ENCODE measurements at regions of chr11 and their contacts with region 1.

Region 1: DNA sequence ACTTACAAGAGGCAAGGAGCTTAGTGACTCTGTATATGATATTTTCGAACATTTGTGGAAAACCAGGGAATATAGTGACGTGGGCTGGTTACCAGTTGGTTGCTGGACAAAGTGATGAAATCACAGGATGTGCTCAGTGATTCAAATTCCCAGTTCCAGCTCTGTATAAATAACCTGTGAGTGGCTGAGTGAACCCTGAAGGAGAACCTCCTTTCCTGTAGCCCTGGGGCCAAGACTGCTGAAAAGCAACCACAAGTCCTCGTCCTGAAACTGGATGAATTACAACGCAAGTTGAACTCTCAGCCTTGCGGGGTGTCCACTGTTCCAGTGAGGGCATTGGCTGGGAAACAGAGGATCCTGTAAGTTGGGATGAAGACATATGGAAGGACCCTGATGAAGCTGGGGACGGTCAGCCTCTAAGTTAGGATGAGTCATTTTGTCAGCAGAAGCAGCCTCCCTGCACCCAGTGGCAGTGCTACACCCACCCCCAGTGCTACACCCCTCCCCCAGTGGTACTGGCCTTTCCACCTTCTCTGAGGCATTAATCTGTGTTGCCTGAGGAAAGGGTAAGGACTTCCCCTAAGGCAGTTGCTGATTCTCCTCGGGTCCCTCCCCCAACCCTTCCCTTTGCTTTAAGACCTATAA is 22.0 kb upstream of the CD81 start:
- DNase-seq: peak in 1 of 2 experiments; percentile 9
- H3K4me3 ChIP-seq: no peak overlapping the region
- H3K27ac ChIP-seq: peak overlapping the region; percentile 23; the same call in 1 of the 2 replicates
- H3K4me1 ChIP-seq: peaks cover 9% of the 10 kb centered on the region; the same call in 1 of the 2 replicates
- H3K27me3 ChIP-seq: peaks cover 11% of the 10 kb centered on the region; the same call in 1 of the 2 replicates
- CTCF ChIP-seq: no peak

Region 2: GRCh38 chr11:2178906-2179494 is 176.1 kb before region 1 on chr11:
- CTCF ChIA-PET with region 1: no interaction called
- POLR2A ChIA-PET with region 1: no interaction called
- intact Hi-C with region 1: no loop called
- DNase-seq: peak; percentile 87 to 93
- H3K4me3 ChIP-seq: no peak overlapping the region; the same call in 1 of the 2 replicates
- H3K27ac ChIP-seq: peak overlapping the region; percentile 89
- H3K4me1 ChIP-seq: peaks cover 48% of the 10 kb centered on the region
- H3K27me3 ChIP-seq: no peaks in the 10 kb centered on the region
- CTCF ChIP-seq: no peak

Region 3: DNA sequence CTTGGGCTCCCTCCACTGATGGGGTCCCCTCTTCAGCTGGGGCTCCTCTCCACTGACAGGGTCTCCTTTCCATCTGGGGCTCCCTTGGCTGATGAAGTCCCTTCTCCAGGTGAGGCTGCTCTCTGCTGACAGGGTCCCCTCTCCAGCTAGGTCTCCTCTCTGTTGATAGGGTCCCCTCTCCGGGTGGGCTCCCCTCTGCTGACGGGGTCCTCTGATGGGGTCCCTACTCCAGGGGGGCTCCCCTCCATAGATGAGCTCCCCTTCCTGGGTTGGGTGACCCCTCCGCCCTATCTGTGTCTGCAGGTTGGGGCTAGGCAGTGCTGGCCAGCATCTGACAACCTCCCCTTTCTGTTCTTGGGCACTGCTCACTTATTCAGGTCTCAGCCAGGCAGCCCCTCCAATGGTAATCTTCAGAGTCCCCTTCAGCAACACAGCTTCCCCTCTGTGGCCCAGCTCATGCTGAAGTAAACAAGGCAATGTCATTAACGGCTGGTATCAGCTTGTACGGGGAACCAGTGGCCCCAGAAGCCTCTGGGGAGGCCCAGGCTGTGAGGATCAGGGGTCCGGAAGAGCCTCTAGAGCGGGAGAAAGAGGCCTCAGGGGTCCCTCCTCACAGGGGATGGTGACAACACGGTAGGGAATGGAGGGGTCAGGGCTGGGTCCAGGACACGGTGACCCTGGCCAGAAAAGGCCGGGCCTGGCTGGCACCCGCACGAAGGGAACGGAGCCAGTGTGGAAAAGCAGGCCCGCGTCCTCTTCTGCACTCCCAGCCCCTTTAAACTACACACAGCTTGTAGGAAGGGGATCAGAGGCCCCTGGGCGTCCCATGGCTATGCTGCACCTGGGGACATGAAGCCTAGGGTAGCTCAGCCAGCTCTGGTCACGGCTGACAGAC is 12.4 kb after region 1 on chr11:
- CTCF ChIA-PET with region 1: no interaction called
- POLR2A ChIA-PET with region 1: no interaction called
- intact Hi-C with region 1: loop called (anchors 1 kb)
- DNase-seq: no peak
- H3K4me3 ChIP-seq: no peak overlapping the region
- H3K27ac ChIP-seq: no peak overlapping the region
- H3K4me1 ChIP-seq: no peaks in the 10 kb centered on the region
- H3K27me3 ChIP-seq: peaks cover 3% of the 10 kb centered on the region; the same call in 1 of the 2 replicates
- CTCF ChIP-seq: no peak

Region 4: DNA sequence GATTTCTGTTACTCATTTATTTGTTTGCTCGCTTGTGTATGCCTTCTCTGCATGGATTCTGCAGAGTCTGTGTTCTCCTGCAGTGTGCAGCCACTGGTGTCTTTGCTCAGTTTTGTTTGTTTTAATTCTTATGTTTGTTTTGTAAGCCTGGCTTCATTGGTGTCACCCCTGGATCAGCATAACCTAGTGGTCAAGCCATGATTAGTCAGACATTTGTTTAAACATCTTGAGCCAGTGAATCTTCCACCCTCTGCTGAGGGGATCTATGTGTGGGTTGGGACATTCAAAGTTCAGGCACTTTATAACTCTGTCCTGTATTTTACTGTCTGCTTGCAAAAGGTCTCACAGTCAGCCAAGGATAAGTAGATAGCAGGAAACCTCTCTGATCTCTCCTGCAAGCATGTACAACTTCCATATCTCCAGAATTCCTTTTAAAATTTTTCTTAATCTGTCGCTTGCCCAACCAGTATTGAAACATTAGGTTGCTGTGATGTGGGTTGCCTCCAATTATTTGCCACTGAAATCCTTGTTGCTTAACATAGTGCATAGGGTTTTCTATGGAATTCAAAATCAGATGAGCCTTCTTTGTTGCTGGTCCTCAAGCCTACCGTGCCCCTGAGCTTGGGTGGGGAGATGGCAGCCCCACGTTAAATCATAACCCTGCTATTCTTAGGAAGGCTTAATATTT is 257.9 kb after region 1 on chr11:
- CTCF ChIA-PET with region 1: no interaction called
- POLR2A ChIA-PET with region 1: no interaction called
- intact Hi-C with region 1: no loop called
- DNase-seq: no peak
- H3K4me3 ChIP-seq: no peak overlapping the region
- H3K27ac ChIP-seq: no peak overlapping the region
- H3K4me1 ChIP-seq: no peaks in the 10 kb centered on the region
- H3K27me3 ChIP-seq: no peaks in the 10 kb centered on the region
- CTCF ChIP-seq: no peak